ENCODE measurements at regions of chr18 and their contacts with region 1.

Region 1: GRCh38 chr18:55234366-55235093 is 275.3 kb upstream of the CCDC68 start:
- DNase-seq: peak; percentile 55 to 96 (median 84)

Region 2: DNA sequence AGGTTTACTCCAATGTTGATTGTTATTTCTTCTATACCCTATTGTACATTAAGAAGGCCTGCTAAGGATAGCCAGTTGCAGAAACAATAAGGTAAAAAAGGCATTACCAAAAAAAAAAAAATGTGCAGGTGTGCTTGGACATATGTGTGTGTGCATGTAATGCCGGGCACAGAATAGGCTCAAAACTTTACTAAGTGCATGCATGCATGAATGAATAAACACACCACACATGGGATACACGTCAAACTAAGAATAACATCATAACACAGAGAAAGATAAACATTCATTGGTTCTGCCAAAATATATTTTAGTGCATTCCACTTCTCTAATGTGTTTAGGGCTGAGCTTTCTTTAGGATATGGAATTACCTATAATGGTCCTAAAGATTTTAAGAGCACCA is 55.2 kb after region 1 on chr18:
- intact Hi-C with region 1: no loop called
- DNase-seq: no peak

Region 3: GRCh38 chr18:55322178-55322735 is 87.7 kb after region 1 on chr18:
- intact Hi-C with region 1: loop called (anchors 5 kb)
- DNase-seq: peak; percentile 67 to 96 (median 78)

Region 4: DNA sequence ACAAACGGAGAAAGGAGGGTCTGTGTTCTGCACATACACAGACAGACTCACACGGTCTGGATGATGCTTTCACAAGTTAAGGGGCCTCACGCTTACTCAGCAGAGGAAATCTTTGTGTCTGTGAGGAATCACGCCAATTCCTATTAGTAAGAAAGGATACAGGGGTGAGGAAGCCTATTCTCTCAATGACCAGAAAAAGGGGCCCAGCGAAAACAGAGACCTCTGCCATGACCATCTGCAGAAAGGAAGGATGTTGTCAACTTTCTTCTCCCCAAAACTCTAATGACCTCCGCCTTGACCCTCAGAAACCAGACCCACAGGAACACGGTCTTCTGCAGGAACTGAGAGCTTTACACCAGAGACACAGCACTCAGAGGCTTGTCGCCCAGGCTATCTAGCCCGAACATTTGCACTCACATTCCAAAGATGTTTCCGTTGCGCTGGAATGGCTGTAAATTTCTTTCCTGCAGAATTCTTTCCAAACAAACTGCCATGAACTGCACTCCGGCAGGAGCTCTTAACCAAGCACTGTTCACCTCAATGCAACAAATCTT is 167.2 kb after region 1 on chr18:
- intact Hi-C with region 1: loop called (anchors 5 kb)
- DNase-seq: peak in 1 of 10 donors; percentile 72

Region 5: GRCh38 chr18:55781481-55781957 is 547.0 kb after region 1 on chr18:
- intact Hi-C with region 1: loop called (anchors 1 kb)
- DNase-seq: peak in 9 of 10 donors; percentile 35 to 94 (median 64)

Measured in posterior cingulate gyrus (tissue), 11 donors.